AG04449 (cell line): ENCODE measurements at regions of chr1 and their contacts with region 1.

Region 1: GRCh38 chr1:161159087-161159912 is at the start of gene USP21:
- DNase-seq: no peak
- H3K4me3 ChIP-seq: peak within 1 kb of the TSS; percentile 90
- CTCF ChIP-seq: peak; percentile 38

Region 2: DNA sequence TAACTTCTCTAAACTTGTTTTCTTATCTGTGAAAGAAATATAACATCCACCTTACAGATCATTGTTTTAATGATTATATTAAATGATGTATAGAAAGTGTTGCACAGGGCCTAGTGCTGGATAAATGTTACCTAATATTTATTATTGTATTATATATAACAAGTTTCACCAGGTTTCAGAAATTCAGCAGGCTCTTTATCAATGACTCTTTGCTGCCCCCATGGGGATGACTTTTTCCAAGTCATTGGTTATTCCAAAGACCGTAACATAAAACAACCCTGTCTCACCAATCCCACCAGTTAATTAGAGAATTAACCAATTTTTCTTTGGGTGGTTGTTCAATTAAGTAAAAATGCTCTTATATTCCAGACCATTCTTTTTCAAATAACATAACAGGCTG is 19.5 kb before region 1 on chr1:
- CTCF ChIA-PET with region 1: interaction called, 10 read pairs
- POLR2A ChIA-PET with region 1: no interaction called
- DNase-seq: no peak
- H3K4me3 ChIP-seq: no peak overlapping the region
- CTCF ChIP-seq: peak; percentile 34

Region 3: DNA sequence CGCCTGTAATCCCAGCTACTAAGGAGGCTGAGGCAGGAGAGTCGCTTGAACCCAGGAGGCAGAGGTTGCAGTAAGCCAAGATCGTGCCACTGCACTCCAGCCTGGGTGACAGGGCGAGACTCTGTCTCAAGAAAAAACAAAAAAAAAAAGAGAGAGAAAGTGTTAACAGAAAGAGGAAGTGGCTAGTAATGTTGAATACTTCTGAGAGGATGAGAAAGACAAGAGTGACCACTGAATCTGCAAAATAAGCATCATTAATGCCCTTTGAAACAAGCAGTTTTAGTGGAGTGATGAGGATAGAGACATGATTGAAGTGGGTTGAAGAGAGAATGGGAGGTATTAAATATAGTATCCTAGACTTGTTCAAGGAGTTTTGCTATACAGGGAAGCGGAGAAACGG is 138.8 kb after region 1 on chr1:
- CTCF ChIA-PET with region 1: no interaction called
- POLR2A ChIA-PET with region 1: no interaction called
- DNase-seq: no peak
- H3K4me3 ChIP-seq: no peak overlapping the region
- CTCF ChIP-seq: no peak